BJ (cell line): ENCODE measurements at regions of chr20 and their contacts with region 1.

Region 1: GRCh38 chr20:51372176-51372803 is 170.2 kb downstream of the NFATC2 start:
- DNase-seq: no peak
- H3K4me3 ChIP-seq: no peak overlapping the region
- H3K27me3 ChIP-seq: no peaks in the 10 kb centered on the region
- CTCF ChIP-seq: peak; percentile 94

Region 2: GRCh38 chr20:51362249-51362648 is 10.0 kb before region 1 on chr20:
- CTCF ChIA-PET with region 1: no interaction called
- POLR2A ChIA-PET with region 1: no interaction called
- DNase-seq: no peak
- H3K4me3 ChIP-seq: no peak overlapping the region
- H3K27me3 ChIP-seq: no peaks in the 10 kb centered on the region
- CTCF ChIP-seq: no peak

Region 3: DNA sequence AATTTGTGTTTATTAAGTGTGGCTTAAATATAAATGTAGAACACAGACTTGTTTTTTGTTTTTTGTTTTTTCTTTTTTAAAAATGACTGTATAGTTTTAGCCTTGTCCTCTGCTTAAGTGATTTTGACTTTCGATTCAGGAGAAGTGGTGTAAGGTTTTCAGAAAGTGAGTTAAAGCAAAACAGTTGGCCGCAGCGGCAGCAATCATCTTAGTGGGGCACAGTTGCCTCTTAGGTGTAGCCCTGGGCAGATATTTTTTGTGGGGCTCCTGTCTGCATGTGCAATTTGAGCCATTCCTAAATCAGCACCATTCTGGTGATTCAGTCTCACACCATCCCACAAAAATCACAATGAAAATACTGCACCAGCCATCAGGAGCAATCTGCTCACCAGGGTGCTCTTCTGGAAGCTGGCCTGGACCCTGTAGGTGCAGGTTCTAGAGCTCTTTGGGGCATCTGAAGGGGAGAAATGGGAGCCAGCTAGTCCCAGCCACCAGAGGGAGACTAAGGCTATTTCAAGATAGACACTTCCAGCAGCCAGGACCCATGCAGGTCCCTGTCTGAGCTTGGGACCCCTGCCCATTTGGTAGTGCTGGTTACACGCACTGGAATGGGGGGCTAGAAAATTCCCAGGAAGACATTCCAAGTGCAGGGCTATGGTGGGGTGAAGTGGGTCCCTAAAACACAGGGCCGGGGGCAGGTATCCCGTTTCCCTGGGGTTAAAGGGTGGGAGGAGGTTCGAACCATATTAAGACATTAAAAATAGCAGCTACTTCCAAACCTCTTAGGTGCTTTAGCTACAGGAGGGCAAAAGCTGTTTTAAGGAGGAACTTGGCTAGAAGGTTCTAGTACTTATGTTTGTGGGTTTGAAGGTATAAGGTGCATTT is 13.6 kb after region 1 on chr20:
- CTCF ChIA-PET with region 1: interaction called, 28 read pairs
- POLR2A ChIA-PET with region 1: no interaction called
- DNase-seq: no peak
- H3K4me3 ChIP-seq: no peak overlapping the region
- H3K27me3 ChIP-seq: no peaks in the 10 kb centered on the region
- CTCF ChIP-seq: peak; percentile 75

Region 4: GRCh38 chr20:51562332-51563155 is 190.3 kb after region 1 on chr20:
- CTCF ChIA-PET with region 1: interaction called, 11 read pairs
- POLR2A ChIA-PET with region 1: no interaction called
- DNase-seq: peak; percentile 89
- H3K4me3 ChIP-seq: peak overlapping the region; percentile 37
- H3K27me3 ChIP-seq: no peaks in the 10 kb centered on the region
- CTCF ChIP-seq: 0 out of 2 replicates have a peak, but pooled peaks have one; percentile 6

Region 5: DNA sequence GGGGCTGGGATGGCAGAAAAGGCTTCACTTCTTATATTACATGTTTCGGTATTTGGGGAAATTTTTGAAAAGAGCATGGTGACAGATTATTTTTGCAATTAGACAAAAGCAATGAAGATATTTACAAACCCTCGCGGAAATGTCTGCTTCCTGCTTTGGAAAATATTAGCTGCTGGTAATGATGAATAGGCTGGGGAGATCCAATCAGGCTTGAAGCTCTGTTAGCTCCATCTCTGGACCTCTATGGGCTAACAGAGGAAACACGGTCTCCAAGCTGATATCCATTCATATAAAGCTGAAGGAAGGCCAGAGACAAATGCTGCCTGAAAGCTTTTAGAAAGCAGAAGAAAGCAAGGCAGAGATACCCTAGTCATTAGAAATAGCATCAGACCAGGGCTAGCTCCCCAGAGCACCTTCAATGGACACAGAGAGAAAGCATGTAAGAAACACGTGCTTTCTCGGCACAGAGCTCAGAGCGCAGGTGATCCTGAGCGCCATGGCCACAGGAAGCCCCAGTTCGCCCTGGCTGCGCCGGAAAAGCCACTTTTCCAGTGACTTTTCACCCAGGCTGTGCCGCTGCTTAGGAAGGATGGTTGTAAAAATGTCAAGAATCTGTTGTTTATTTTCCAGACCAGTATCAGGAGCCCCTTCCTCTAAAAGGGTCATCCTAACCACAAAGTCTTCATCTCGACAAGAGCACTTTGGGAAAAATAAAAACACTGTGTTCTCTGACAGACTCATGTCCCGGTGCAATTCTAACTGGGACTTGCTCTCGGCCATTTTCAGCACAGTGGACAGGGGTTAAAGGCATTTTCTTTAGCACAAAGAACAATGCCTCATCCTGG is 238.7 kb after region 1 on chr20:
- CTCF ChIA-PET with region 1: interaction called, 12 read pairs
- POLR2A ChIA-PET with region 1: no interaction called
- DNase-seq: no peak
- H3K4me3 ChIP-seq: no peak overlapping the region
- H3K27me3 ChIP-seq: no peaks in the 10 kb centered on the region
- CTCF ChIP-seq: no peak

Region 6: GRCh38 chr20:51624157-51624731 is 252.0 kb after region 1 on chr20:
- CTCF ChIA-PET with region 1: interaction called, 99 read pairs
- POLR2A ChIA-PET with region 1: no interaction called
- DNase-seq: no peak
- H3K4me3 ChIP-seq: no peak overlapping the region
- H3K27me3 ChIP-seq: no peaks in the 10 kb centered on the region
- CTCF ChIP-seq: peak; percentile 81